ENCODE measurements at regions of chr6 and their contacts with region 1.

Region 1: DNA sequence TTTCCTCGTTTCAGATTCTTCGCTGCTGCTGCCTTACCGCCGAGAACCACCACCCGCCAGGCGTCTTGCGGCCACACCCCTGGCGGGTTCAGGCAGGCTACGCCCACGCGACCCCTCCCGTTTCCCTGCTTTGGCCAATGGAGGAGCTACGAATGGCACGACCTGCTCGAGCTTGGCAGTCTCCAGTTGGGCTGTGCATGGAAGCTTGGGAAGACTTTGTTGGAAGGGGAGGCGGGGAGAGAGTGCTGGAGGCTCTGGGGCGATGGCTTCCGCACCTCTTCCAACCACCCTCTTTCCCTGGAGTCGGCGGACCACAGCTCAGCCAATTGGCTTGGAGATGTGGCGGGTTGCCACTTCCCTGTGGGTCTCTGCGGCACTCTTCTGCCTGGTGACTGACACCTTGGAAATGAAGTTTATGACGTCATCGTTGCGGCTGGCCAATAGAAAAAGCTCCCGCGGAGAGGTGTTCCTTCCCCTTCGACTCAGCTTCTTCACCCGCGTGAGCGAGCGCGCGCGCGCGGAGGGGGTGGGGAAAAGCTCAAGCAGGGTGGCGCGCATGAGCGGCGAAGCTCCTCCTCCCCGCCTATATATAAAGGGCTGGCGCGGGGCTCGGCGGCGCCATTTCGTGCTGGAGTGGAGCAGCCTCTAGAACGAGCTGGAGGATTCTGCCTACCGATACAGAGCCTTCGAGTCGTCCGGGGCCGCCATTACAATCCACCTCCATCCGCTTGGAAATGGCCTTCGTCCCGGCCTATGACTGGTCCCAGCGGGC is 3.4 kb downstream of the BRD2 start:
- DNase-seq: peak; percentile 99
- H3K4me3 ChIP-seq: peak overlapping the region; percentile 92
- H3K4me3 Mint-ChIP-seq: peak overlapping the region; percentile 85
- H3K27ac Mint-ChIP-seq: peak overlapping the region; percentile 100
- H3K4me1 ChIP-seq: peaks cover 27% of the 10 kb centered on the region
- H3K4me1 Mint-ChIP-seq: peaks cover 24% of the 10 kb centered on the region
- H3K27me3 ChIP-seq: no peaks in the 10 kb centered on the region
- H3K27me3 Mint-ChIP-seq: no peaks in the 10 kb centered on the region
- CTCF ChIP-seq: no peak

Region 2: GRCh38 chr6:32195652-32195901 is 776.2 kb before region 1 on chr6:
- CTCF ChIA-PET with region 1: interaction called, 6 read pairs
- POLR2A ChIA-PET with region 1: interaction called, 7 read pairs
- intact Hi-C with region 1: loop called (anchors 10 kb)
- DNase-seq: peak; percentile 100
- H3K4me3 ChIP-seq: peak overlapping the region; percentile 95
- H3K4me3 Mint-ChIP-seq: peak overlapping the region; percentile 94
- H3K27ac Mint-ChIP-seq: peak overlapping the region; percentile 99
- H3K4me1 ChIP-seq: peaks cover 15% of the 10 kb centered on the region
- H3K4me1 Mint-ChIP-seq: peaks cover 16% of the 10 kb centered on the region
- H3K27me3 ChIP-seq: no peaks in the 10 kb centered on the region
- H3K27me3 Mint-ChIP-seq: no peaks in the 10 kb centered on the region
- CTCF ChIP-seq: peak; percentile 17 to 70

Region 3: DNA sequence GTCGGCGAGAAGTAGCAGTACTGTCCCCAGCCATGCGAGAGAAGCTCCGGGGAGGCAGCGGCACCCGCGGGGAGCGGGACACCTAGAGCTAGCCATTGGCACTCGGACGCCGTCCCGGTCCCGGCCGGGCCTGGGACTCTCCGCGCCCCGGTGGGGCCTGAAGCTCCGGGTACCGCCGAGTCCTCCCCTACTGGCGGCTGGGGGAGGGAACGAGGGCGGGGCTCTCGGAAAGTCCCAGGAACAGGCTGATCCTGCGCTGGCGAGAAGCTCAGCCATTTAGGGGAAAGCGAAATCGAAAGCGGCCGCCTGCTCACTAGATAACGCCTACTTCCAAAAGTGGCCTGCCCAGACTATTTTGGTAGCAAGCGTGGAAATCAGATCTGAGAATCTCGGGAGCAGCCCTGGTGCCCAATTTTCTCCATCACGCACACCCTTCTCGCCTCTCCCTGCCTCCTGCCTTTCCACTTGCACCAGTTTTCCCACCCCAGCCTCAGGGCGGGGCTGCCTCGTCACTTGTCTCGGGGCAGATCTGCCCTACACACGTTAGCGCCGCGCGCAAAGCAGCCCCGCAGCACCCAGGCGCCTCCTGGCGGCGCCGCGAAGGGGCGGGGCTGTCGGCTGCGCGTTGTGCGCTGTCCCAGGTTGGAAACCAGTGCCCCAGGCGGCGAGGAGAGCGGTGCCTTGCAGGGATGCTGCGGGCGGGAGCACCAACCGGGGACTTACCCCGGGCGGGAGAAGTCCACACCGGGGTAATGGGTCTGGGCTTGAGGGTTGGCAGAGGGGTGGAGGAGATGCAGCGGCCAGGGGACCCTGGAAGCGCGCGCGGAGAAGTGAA is 118.0 kb before region 1 on chr6 and contains the starts of genes PSMB9 and TAP1:
- CTCF ChIA-PET with region 1: interaction called, 4 read pairs
- POLR2A ChIA-PET with region 1: interaction called, 17 read pairs
- intact Hi-C with region 1: no loop called
- DNase-seq: peak; percentile 84 to 90
- H3K4me3 ChIP-seq: peak within 1 kb of the TSS; percentile 46
- H3K4me3 Mint-ChIP-seq: peak within 1 kb of the TSS; percentile 88
- H3K27ac Mint-ChIP-seq: peak within 1 kb of the TSS; percentile 73
- H3K4me1 ChIP-seq: peaks cover 6% of the 10 kb centered on the region; the same call in 1 of the 2 replicates
- H3K4me1 Mint-ChIP-seq: peaks cover 16% of the 10 kb centered on the region
- H3K27me3 ChIP-seq: peaks cover 1% of the 10 kb centered on the region
- H3K27me3 Mint-ChIP-seq: peaks cover 26% of the 10 kb centered on the region
- CTCF ChIP-seq: peak; percentile 65 to 85
- total RNA-seq, gene PSMB9: 1.3 TPM in 1 of 2 replicates, not detected in the other
- total RNA-seq, gene TAP1: 2.4 and 3.7 TPM in 2 replicates

Region 4: DNA sequence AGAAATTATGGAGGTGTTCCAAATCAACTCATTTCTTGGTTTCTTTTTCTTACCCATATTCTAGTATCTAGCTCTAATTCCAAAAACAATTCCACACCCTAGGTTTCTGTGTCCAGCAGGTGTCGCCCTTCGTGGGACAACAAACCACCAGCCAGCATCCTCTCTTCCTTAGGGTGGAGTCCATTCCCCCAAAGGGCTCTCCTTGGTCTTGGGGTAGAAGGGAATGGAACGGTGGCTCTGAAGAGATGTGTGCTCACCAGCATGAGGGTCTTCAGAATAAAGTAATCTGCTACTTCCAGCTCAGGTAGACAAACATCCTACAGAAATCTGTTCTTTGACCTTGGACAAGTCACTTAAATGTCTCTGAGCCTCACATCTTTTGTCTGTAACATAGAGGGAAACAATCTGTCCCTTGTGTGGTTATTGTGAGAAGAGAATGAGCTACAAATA is 38.1 kb before region 1 on chr6:
- CTCF ChIA-PET with region 1: interaction called, 16 read pairs
- POLR2A ChIA-PET with region 1: interaction called, 7 read pairs
- intact Hi-C with region 1: no loop called
- DNase-seq: peak; percentile 66 to 76
- H3K4me3 ChIP-seq: no peak overlapping the region
- H3K4me3 Mint-ChIP-seq: no peak overlapping the region
- H3K27ac Mint-ChIP-seq: no peak overlapping the region
- H3K4me1 ChIP-seq: no peaks in the 10 kb centered on the region
- H3K4me1 Mint-ChIP-seq: no peaks in the 10 kb centered on the region
- H3K27me3 ChIP-seq: no peaks in the 10 kb centered on the region
- H3K27me3 Mint-ChIP-seq: peaks cover 22% of the 10 kb centered on the region
- CTCF ChIP-seq: peak; percentile 63 to 77

Region 5: GRCh38 chr6:32984605-32985389 is 13.0 kb after region 1 on chr6:
- CTCF ChIA-PET with region 1: interaction called, 46 read pairs
- POLR2A ChIA-PET with region 1: interaction called, 61 read pairs
- intact Hi-C with region 1: no loop called
- DNase-seq: peak; percentile 84 to 86
- H3K4me3 ChIP-seq: no peak overlapping the region
- H3K4me3 Mint-ChIP-seq: peak overlapping the region; percentile 8
- H3K27ac Mint-ChIP-seq: no peak overlapping the region
- H3K4me1 ChIP-seq: peaks cover 17% of the 10 kb centered on the region
- H3K4me1 Mint-ChIP-seq: peaks cover 13% of the 10 kb centered on the region
- H3K27me3 ChIP-seq: no peaks in the 10 kb centered on the region
- H3K27me3 Mint-ChIP-seq: no peaks in the 10 kb centered on the region
- CTCF ChIP-seq: peak; percentile 73 to 81

Region 6: GRCh38 chr6:33008944-33009861 is 37.4 kb after region 1 on chr6 and contains the start of gene HLA-DOA:
- CTCF ChIA-PET with region 1: no interaction called
- POLR2A ChIA-PET with region 1: no interaction called
- intact Hi-C with region 1: no loop called
- DNase-seq: no peak
- H3K4me3 ChIP-seq: no peak within 1 kb of the TSS
- H3K4me3 Mint-ChIP-seq: no peak within 1 kb of the TSS
- H3K27ac Mint-ChIP-seq: no peak within 1 kb of the TSS
- H3K4me1 ChIP-seq: no peaks in the 10 kb centered on the region
- H3K4me1 Mint-ChIP-seq: no peaks in the 10 kb centered on the region
- H3K27me3 ChIP-seq: no peaks in the 10 kb centered on the region
- H3K27me3 Mint-ChIP-seq: peaks cover 25% of the 10 kb centered on the region
- CTCF ChIP-seq: no peak
- total RNA-seq, gene HLA-DOA: not detected in 2 replicates

Region 7: GRCh38 chr6:33248925-33249731 is 277.4 kb after region 1 on chr6:
- CTCF ChIA-PET with region 1: interaction called, 5 read pairs
- POLR2A ChIA-PET with region 1: interaction called, 16 read pairs
- intact Hi-C with region 1: no loop called
- DNase-seq: peak; percentile 96 to 98
- H3K4me3 ChIP-seq: peak overlapping the region; percentile 49
- H3K4me3 Mint-ChIP-seq: peak overlapping the region; percentile 85
- H3K27ac Mint-ChIP-seq: peak overlapping the region; percentile 75
- H3K4me1 ChIP-seq: peaks cover 5% of the 10 kb centered on the region; the same call in 1 of the 2 replicates
- H3K4me1 Mint-ChIP-seq: peaks cover 10% of the 10 kb centered on the region
- H3K27me3 ChIP-seq: no peaks in the 10 kb centered on the region
- H3K27me3 Mint-ChIP-seq: no peaks in the 10 kb centered on the region
- CTCF ChIP-seq: peak in 1 of 2 experiments; percentile 3

Region 8: DNA sequence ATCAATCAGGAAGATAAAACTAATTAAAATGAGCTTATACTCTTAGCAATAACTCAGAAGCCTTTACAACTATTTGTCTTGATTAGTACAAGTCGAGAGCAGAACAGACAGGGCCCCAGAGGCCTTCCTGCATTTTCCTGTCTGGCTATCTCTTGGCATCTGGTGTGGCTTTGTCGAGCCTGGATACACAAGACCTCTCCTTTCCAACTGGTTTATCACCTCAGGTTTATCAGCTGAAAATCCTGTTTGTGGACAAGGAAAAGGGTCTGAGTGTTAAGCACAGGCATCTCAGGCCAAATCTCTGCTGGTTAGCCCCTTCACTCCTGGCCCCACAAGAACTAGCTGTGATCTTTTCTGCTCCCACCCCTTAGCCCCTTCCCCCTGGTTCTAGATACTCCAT is 575.7 kb after region 1 on chr6:
- CTCF ChIA-PET with region 1: no interaction called
- POLR2A ChIA-PET with region 1: no interaction called
- intact Hi-C with region 1: no loop called
- DNase-seq: no peak
- H3K4me3 ChIP-seq: no peak overlapping the region
- H3K4me3 Mint-ChIP-seq: no peak overlapping the region
- H3K27ac Mint-ChIP-seq: no peak overlapping the region
- H3K4me1 ChIP-seq: peaks cover 22% of the 10 kb centered on the region
- H3K4me1 Mint-ChIP-seq: peaks cover 12% of the 10 kb centered on the region
- H3K27me3 ChIP-seq: no peaks in the 10 kb centered on the region
- H3K27me3 Mint-ChIP-seq: no peaks in the 10 kb centered on the region
- CTCF ChIP-seq: no peak

Measured in Caco-2 (cell line).